AG04450 (cell line): ENCODE measurements at regions of chr18 and their contacts with region 1.

Region 1: DNA sequence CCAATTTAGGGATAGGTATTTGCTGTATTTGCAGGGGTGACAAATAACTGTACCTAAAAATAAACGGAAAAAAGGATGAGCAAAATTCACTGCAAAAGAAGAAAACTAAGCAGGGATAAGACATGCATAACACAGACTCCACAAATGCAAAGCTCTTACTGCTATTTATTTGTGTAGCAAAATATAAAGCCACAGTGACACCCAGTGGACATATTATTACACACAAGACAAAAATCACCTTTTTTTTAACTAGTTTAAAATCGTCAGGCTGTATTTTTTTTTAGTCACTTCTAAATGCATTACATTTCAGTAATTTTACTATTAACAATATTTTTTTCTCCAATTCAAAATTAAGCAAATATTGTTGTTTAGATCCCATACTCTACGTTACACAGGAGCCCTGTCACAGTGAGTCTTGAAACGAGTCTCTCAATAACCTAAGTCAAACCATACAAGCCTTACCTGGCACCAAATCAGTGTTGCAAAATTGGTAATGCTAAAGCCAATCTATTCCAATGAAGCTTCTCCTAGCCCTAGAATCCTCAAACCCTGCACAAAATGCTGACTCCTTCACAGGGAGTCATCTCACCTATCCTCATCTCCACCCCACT is 23.7 kb downstream of the METTL4 start:
- DNase-seq: peak; percentile 36
- H3K4me3 ChIP-seq: no peak overlapping the region
- H3K27ac ChIP-seq: no peak overlapping the region
- H3K27me3 ChIP-seq: no peaks in the 10 kb centered on the region
- CTCF ChIP-seq: peak; percentile 58

Region 2: DNA sequence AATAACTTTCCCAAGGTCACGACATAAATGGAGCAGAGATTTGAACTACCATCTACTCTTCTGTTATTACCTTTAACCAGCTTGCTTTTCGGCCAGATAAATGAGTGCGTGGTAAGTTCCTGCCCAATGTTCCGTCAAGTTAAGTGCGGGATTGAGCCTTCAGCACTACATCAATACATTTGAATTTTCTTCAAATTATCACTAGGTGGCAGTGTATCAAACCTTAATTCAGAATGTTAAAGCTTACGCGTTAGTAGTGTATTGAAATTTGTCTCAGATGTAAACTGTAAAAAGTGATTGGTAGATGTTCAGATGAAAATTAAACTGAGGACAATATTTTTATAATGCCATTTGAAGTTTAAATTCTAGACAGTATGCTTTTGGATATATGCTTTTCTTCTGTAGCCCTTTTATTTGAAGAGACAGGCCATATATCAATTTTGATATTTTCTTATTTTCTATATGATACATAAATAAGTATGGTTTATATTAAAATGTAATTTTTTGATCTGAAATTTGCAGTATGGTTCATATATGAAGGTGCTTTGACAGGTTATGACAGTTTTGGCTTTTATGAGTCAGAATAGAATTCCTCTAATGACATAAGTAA is 961.6 kb before region 1 on chr18:
- CTCF ChIA-PET with region 1: interaction called, 73 read pairs
- POLR2A ChIA-PET with region 1: no interaction called
- DNase-seq: no peak
- H3K4me3 ChIP-seq: no peak overlapping the region
- H3K27ac ChIP-seq: no peak overlapping the region
- H3K27me3 ChIP-seq: no peaks in the 10 kb centered on the region
- CTCF ChIP-seq: peak; percentile 40

Region 3: DNA sequence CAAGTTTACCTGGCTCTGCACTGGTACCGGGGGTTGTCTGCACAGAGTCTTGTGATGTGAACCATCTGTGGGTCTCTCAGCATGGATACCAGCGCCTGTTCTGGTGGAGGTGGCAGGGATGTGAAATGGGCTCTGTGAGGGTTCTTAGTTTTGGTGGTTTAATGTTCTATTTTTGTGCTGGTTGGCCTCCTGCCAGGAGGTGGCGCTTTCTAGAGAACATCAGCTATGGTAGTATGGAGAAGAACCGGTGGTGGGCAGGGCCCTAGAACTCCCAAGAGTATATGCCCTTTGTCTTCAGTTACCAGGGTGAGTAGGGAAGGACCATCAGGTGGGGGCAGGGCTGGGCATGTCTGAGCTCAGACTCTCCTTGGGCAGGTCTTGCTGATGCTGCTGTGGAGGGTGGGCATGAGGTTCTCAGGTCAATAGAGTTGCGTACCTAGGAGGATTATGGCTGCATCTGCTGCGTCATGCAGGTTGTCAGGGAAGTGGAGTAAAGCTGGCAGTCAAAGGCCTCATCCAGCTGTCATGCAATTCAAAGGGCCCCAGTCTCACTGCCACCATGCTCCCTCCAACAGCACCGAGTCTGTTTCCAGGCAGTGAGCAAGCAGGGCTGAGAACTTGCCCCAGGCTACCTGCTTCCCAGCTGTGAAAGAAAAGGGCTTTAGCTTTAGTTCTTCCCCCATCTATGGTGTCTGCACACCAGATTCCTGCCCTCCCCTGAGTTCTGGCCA is 254.3 kb before region 1 on chr18:
- CTCF ChIA-PET with region 1: no interaction called
- POLR2A ChIA-PET with region 1: no interaction called
- DNase-seq: no peak
- H3K4me3 ChIP-seq: no peak overlapping the region
- H3K27ac ChIP-seq: no peak overlapping the region
- H3K27me3 ChIP-seq: no peaks in the 10 kb centered on the region
- CTCF ChIP-seq: no peak

Region 4: GRCh38 chr18:2337552-2338141 is 209.9 kb before region 1 on chr18:
- CTCF ChIA-PET with region 1: interaction called, 42 read pairs
- POLR2A ChIA-PET with region 1: no interaction called
- DNase-seq: no peak
- H3K4me3 ChIP-seq: no peak overlapping the region
- H3K27ac ChIP-seq: no peak overlapping the region
- H3K27me3 ChIP-seq: no peaks in the 10 kb centered on the region
- CTCF ChIP-seq: peak; percentile 59

Region 5: GRCh38 chr18:3093624-3094337 is 546.2 kb after region 1 on chr18:
- CTCF ChIA-PET with region 1: no interaction called
- POLR2A ChIA-PET with region 1: no interaction called
- DNase-seq: no peak
- H3K4me3 ChIP-seq: no peak overlapping the region
- H3K27ac ChIP-seq: no peak overlapping the region
- H3K27me3 ChIP-seq: peaks cover 2% of the 10 kb centered on the region
- CTCF ChIP-seq: no peak